ENCODE measurements at regions of chr14 and their contacts with region 1.

Region 1: GRCh38 chr14:47278234-47278842 is 397.1 kb downstream of the MDGA2 start:
- DNase-seq: peak; percentile 48
- H3K4me3 Mint-ChIP-seq: no peak overlapping the region
- H3K27ac Mint-ChIP-seq: no peak overlapping the region
- H3K4me1 Mint-ChIP-seq: no peaks in the 10 kb centered on the region
- H3K27me3 Mint-ChIP-seq: no peaks in the 10 kb centered on the region

Region 2: GRCh38 chr14:46581036-46581671 is 697.2 kb before region 1 on chr14:
- CTCF ChIA-PET with region 1: interaction called, 3 read pairs
- POLR2A ChIA-PET with region 1: no interaction called
- intact Hi-C with region 1: loop called (anchors 5 kb)
- DNase-seq: no peak
- H3K4me3 Mint-ChIP-seq: no peak overlapping the region
- H3K27ac Mint-ChIP-seq: no peak overlapping the region
- H3K4me1 Mint-ChIP-seq: no peaks in the 10 kb centered on the region
- H3K27me3 Mint-ChIP-seq: no peaks in the 10 kb centered on the region

Region 3: DNA sequence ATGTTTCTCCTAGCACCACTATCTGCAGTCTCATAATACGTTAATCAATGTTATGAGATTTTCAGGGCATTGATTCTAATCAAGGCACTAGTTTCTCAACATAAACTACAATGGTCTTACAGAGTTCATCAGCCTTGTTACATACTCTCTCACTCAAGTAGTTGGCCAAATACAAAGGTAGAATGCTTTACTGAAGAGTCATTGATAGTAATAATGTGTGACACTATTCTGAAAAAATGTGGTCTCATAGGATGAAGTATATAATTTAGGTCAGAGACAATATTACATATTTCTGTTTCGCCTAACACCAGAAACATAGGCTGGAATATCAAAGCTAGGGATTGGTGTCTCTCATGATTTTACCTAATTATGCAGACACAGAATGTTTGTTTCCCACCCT is 432.2 kb after region 1 on chr14:
- CTCF ChIA-PET with region 1: no interaction called
- POLR2A ChIA-PET with region 1: no interaction called
- intact Hi-C with region 1: no loop called
- DNase-seq: no peak
- H3K4me3 Mint-ChIP-seq: no peak overlapping the region
- H3K27ac Mint-ChIP-seq: no peak overlapping the region
- H3K4me1 Mint-ChIP-seq: no peaks in the 10 kb centered on the region
- H3K27me3 Mint-ChIP-seq: no peaks in the 10 kb centered on the region